ENCODE measurements at regions of chr11 and their contacts with region 1.

Region 1: GRCh38 chr11:118198370-118198769 is 21.9 kb upstream of the SCN2B start:
- DNase-seq: peak; percentile 42 to 52
- ATAC-seq: no peak
- H3K4me3 ChIP-seq: peak overlapping the region in 1 of 4 donors; percentile 4
- H3K27ac ChIP-seq: no peak overlapping the region
- H3K4me1 ChIP-seq: peaks cover 20 to 21% of the 10 kb centered on the region in 2 donors
- H3K27me3 ChIP-seq: no peaks in the 10 kb centered on the region
- CTCF ChIP-seq: peak; percentile 69 to 88 (median 80)
- POLR2A ChIP-seq: no peak

Region 2: GRCh38 chr11:118156531-118157185 is 41.7 kb before region 1 on chr11:
- in situ Hi-C with region 1: no loop called
- intact Hi-C with region 1: no loop called
- DNase-seq: peak; percentile 35 to 38
- ATAC-seq: peak; percentile 48 to 62
- H3K4me3 ChIP-seq: peak overlapping the region in 3 of 4 donors; percentile 4 to 25 (median 4)
- H3K27ac ChIP-seq: peak overlapping the region in 3 of 4 donors; percentile 18 to 71 (median 23)
- H3K4me1 ChIP-seq: peaks cover 45 to 54% of the 10 kb centered on the region in 2 donors
- H3K27me3 ChIP-seq: peaks cover 0 to 11% (median 0%) of the 10 kb centered on the region in 3 donors
- CTCF ChIP-seq: no peak
- POLR2A ChIP-seq: no peak

Region 3: GRCh38 chr11:118290923-118291322 is 92.6 kb after region 1 on chr11:
- in situ Hi-C with region 1: loop called in 1 of 4 experiments (anchors 10 kb)
- intact Hi-C with region 1: loop called (anchors 1 kb)
- DNase-seq: no peak
- ATAC-seq: no peak
- H3K4me3 ChIP-seq: no peak overlapping the region
- H3K27ac ChIP-seq: no peak overlapping the region
- H3K4me1 ChIP-seq: no peaks in the 10 kb centered on the region
- H3K27me3 ChIP-seq: no peaks in the 10 kb centered on the region
- CTCF ChIP-seq: peak in 1 of 5 experiments; percentile 16
- POLR2A ChIP-seq: no peak

Region 4: DNA sequence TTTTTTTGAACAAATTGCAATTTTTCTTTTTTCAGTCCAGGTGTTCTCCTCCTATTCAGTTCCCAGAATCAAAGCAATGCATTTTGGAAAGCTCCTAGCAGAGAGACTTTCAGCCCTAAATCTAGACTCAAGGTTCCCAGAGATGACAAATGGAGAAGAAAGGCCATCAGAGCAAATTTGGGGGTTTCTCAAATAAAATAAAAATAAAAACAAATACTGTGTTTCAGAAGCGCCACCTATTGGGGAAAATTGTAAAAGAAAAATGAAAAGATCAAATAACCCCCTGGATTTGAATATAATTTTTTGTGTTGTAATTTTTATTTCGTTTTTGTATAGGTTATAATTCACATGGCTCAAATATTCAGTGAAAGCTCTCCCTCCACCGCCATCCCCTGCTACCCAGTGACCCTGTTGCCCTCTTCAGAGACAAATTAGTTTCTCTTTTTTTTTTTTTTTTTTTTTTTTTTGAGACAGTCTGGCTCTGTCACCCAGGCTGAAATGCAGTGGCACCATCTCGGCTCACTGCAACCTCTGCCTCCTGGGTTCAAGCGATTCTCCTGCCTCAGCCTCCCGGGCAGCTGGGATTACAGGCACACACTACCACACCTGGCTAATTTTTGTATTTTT is 154.8 kb after region 1 on chr11:
- in situ Hi-C with region 1: loop called in 3 of 4 experiments (anchors 5 to 10 kb)
- intact Hi-C with region 1: loop called (anchors 2 kb)
- DNase-seq: no peak
- ATAC-seq: no peak
- H3K4me3 ChIP-seq: no peak overlapping the region
- H3K27ac ChIP-seq: no peak overlapping the region
- H3K4me1 ChIP-seq: no peaks in the 10 kb centered on the region
- H3K27me3 ChIP-seq: peaks cover 0 to 19% (median 9%) of the 10 kb centered on the region in 3 donors
- CTCF ChIP-seq: peak; percentile 11 to 59 (median 27)
- POLR2A ChIP-seq: no peak

Region 5: GRCh38 chr11:118401151-118401878 is 202.9 kb after region 1 on chr11 and contains the start of gene ATP5MG:
- in situ Hi-C with region 1: no loop called
- intact Hi-C with region 1: loop called (anchors 1 kb)
- DNase-seq: peak; percentile 81 to 86
- ATAC-seq: peak; percentile 88 to 89
- H3K4me3 ChIP-seq: peak within 1 kb of the TSS; percentile 77 to 97 (median 86)
- H3K27ac ChIP-seq: peak within 1 kb of the TSS; percentile 81 to 90 (median 88)
- H3K4me1 ChIP-seq: peaks cover 37 to 39% of the 10 kb centered on the region in 2 donors
- H3K27me3 ChIP-seq: no peaks in the 10 kb centered on the region
- CTCF ChIP-seq: peak in 4 of 5 experiments; percentile 8 to 27 (median 22)
- POLR2A ChIP-seq: peak; percentile 74 to 79
- total RNA-seq, gene ATP5MG: 46.9 to 90.6 (median 55.4) TPM

Region 6: GRCh38 chr11:118497831-118498230 is 299.5 kb after region 1 on chr11:
- in situ Hi-C with region 1: loop called in 3 of 4 experiments (anchors 5 to 25 kb)
- intact Hi-C with region 1: no loop called
- DNase-seq: no peak
- ATAC-seq: no peak
- H3K4me3 ChIP-seq: no peak overlapping the region
- H3K27ac ChIP-seq: no peak overlapping the region
- H3K4me1 ChIP-seq: peaks cover 0 to 6% of the 10 kb centered on the region in 2 donors
- H3K27me3 ChIP-seq: no peaks in the 10 kb centered on the region
- CTCF ChIP-seq: no peak
- POLR2A ChIP-seq: no peak